Activated CD4-positive, alpha-beta memory T cell treated with anti-CD3 and anti-CD28 coated beads, Interleukin-2, amount 10 ng/mL, durations not matched to agents 7 days and 5 days (primary cell): ENCODE measurements at regions of chr4 and their contacts with region 1.

Region 1: GRCh38 chr4:56840559-56840958 is 19.1 kb upstream of the SPINK2 start:
- DNase-seq: no peak
- H3K4me3 Mint-ChIP-seq: no peak overlapping the region
- H3K27ac Mint-ChIP-seq: no peak overlapping the region
- H3K4me1 Mint-ChIP-seq: peaks cover 4% of the 10 kb centered on the region
- H3K27me3 Mint-ChIP-seq: peaks cover 1% of the 10 kb centered on the region

Region 2: GRCh38 chr4:56424697-56425514 is 415.7 kb before region 1 on chr4:
- CTCF ChIA-PET with region 1: interaction called, 14 read pairs
- POLR2A ChIA-PET with region 1: no interaction called
- DNase-seq: peak; percentile 32
- H3K4me3 Mint-ChIP-seq: no peak overlapping the region
- H3K27ac Mint-ChIP-seq: no peak overlapping the region
- H3K4me1 Mint-ChIP-seq: peaks cover 17% of the 10 kb centered on the region
- H3K27me3 Mint-ChIP-seq: no peaks in the 10 kb centered on the region

Region 3: DNA sequence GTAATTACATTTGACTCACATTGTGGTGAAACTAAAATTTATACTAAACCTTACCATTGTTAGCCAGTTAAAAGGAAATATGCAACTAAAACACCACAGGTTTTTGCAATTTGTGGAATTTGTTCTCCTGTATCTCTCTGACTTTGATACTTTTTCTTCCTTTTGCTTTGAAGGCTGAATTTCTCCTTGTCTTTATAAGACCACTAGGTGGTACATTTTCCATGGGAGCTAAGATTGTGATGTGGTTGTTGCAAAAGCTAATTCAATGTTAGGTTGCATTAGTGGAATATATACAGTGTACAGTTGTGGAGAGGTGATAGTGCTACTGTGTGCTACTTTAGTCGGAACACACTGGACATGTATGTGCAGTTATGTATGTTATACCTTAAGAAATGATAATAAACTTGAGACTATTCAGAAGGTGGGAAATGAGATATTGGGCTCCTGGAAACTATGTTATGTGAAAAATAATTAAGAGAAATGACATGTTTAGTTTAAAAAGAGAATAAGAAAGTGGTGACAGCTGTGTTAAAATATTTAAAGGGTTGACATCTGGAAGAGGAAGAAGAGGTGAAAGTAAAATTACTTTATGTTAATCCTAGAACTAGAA is 264.6 kb before region 1 on chr4:
- CTCF ChIA-PET with region 1: interaction called, 11 read pairs
- POLR2A ChIA-PET with region 1: no interaction called
- DNase-seq: no peak
- H3K4me3 Mint-ChIP-seq: no peak overlapping the region
- H3K27ac Mint-ChIP-seq: no peak overlapping the region
- H3K4me1 Mint-ChIP-seq: peaks cover 5% of the 10 kb centered on the region
- H3K27me3 Mint-ChIP-seq: peaks cover 15% of the 10 kb centered on the region

Region 4: GRCh38 chr4:56799824-56800756 is 40.5 kb before region 1 on chr4:
- CTCF ChIA-PET with region 1: interaction called, 17 read pairs
- POLR2A ChIA-PET with region 1: no interaction called
- DNase-seq: peak; percentile 89
- H3K4me3 Mint-ChIP-seq: peak overlapping the region; percentile 88
- H3K27ac Mint-ChIP-seq: peak overlapping the region; percentile 50
- H3K4me1 Mint-ChIP-seq: peaks cover 30% of the 10 kb centered on the region
- H3K27me3 Mint-ChIP-seq: peaks cover 15% of the 10 kb centered on the region

Region 5: DNA sequence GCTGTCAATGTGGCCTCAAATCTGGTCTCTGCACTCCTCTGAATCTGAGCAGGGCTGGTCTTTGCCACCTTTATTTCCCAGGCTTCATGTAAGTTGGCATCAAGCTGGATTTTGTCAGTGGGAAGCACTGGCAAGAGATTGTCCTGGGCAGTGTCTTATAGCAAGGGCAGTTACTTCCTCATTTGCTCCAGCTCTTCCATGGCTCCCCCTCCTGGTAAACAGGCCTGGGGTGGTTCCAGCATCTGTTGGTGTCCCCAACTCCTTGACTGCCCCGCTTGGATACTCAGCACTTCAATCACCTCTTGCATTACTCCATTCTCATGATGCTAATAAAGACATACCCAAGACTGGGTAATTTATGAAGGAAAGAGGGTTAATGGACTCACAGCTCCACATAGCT is 52.1 kb after region 1 on chr4:
- CTCF ChIA-PET with region 1: no interaction called
- POLR2A ChIA-PET with region 1: no interaction called
- DNase-seq: no peak
- H3K4me3 Mint-ChIP-seq: no peak overlapping the region
- H3K27ac Mint-ChIP-seq: no peak overlapping the region
- H3K4me1 Mint-ChIP-seq: no peaks in the 10 kb centered on the region
- H3K27me3 Mint-ChIP-seq: peaks cover 9% of the 10 kb centered on the region